HCT116 (cell line): ENCODE measurements at regions of chr16 and their contacts with region 1.

Region 1: DNA sequence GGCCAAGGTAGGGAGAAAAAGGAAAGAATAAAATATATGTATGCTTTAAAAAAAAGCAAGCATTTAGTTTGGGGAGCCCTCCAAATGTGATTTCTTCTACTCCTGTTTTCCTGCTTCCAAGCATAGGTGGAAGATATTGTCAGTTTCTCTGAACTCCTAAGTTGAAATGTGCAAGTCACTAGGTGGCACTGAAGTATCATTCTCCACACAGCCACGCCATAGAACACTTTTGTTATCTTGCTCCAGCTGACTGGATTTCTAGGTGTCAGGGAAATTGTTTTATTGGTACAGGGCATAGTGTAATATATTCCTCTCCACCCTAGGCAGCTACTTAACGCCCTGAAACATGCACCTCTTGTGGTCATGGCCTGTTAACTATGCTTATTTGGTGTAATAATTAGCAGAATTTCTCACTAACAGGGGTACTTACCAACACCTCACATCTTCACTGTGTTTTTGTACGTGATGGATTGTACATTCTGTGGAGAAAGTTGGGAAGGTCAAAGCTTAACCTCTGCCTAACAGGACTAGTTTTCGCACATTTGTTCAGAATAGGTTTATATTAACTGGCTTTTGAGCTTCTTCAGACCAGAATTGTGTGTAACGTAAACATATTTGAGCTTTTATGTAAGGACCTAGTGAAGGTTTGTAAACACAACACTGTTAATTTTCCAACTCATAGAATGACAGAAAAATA is 69.3 kb downstream of the FTO start:
- DNase-seq: no peak
- ATAC-seq: peak; percentile 51
- H3K4me3 ChIP-seq: no peak overlapping the region
- H3K27ac ChIP-seq: no peak overlapping the region
- H3K4me1 ChIP-seq: peaks cover 32 to 40% of the 10 kb centered on the region in 2 experiments
- H3K27me3 ChIP-seq: no peaks in the 10 kb centered on the region
- CTCF ChIP-seq: peak; percentile 46 to 68 (median 56); a peak in 4 of 6 replicates
- POLR2A ChIP-seq: no peak
- RAD21 ChIP-seq: peak; percentile 91

Region 2: GRCh38 chr16:53549970-53550690 is 223.2 kb before region 1 on chr16:
- CTCF ChIA-PET with region 1: interaction called, 5 read pairs
- POLR2A ChIA-PET with region 1: no interaction called
- RAD21 ChIA-PET with region 1: no interaction called
- intact Hi-C with region 1: loop called (anchors 5 kb)
- DNase-seq: peak; percentile 46
- ATAC-seq: peak; percentile 86
- H3K4me3 ChIP-seq: no peak overlapping the region
- H3K27ac ChIP-seq: no peak overlapping the region
- H3K4me1 ChIP-seq: peaks cover 0 to 9% of the 10 kb centered on the region in 2 experiments; a peak in 2 of 4 replicates
- H3K27me3 ChIP-seq: no peaks in the 10 kb centered on the region
- CTCF ChIP-seq: peak; percentile 59 to 82 (median 61); a peak in 5 of 6 replicates
- POLR2A ChIP-seq: no peak
- RAD21 ChIP-seq: peak; percentile 89

Region 3: DNA sequence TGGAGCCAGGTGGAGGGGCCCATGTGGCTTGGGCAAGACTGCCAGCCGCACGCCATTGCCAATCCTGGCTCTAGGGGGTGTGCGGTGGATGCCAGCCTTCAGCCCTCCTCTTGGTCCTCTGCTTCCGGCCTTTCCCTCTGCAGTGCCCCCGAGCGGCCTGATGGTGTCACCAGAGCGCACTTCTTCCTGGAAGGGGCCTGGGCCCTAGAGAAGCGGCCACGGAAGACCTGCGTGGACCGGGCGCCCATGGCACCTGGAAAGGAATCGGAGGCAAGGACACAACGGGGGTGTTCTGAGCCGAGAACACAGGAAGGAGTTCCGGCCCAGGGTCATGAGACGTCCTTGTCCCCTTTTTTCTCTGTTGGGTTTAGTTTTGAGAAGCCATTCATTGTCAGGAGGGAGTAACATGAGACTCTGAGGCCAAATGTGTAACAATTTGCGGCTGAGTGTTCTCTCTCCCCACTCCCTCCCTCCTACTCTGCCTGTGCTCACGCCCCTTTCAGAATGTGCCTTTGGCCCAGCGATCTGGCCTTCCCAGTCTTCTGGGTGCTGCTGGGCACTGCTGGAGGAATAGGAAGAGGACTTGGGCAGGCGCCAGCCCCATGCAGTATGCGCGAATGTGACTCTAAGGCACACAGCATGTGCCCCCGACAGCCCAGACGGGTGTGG is 420.5 kb after region 1 on chr16:
- CTCF ChIA-PET with region 1: interaction called, 3 read pairs
- POLR2A ChIA-PET with region 1: no interaction called
- RAD21 ChIA-PET with region 1: no interaction called
- intact Hi-C with region 1: loop called (anchors 5 kb)
- DNase-seq: peak; percentile 59
- ATAC-seq: peak; percentile 99
- H3K4me3 ChIP-seq: peak overlapping the region; percentile 21 to 28; a peak in 3 of 4 replicates
- H3K27ac ChIP-seq: peak overlapping the region; percentile 13; the same call in 1 of the 2 replicates
- H3K4me1 ChIP-seq: peaks cover 0 to 9% of the 10 kb centered on the region in 2 experiments; a peak in 3 of 4 replicates
- H3K27me3 ChIP-seq: no peaks in the 10 kb centered on the region; the same call in 1 of the 2 replicates
- CTCF ChIP-seq: peak; percentile 77 to 94 (median 90)
- POLR2A ChIP-seq: no peak
- RAD21 ChIP-seq: peak; percentile 72

Region 4: DNA sequence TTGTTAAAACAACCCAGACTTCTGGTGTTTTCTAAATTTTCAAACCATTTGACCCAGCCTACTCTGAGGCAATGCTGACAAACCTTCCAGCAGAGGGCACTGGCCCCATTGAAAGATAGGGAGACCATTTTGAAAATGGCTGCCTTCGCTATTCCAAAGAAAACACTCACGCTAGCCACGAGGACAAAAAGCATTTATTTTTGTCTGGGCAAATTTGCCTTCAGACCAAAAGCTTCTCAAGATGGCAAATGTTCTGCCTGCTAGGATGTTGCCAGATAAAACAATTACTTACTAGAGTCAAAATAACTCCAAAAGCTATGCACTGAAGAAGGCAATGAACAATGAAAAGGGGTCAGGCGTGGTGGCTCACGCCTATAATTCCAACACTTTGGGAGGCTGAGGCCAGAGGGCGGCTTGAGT is 860.7 kb after region 1 on chr16:
- CTCF ChIA-PET with region 1: no interaction called
- POLR2A ChIA-PET with region 1: no interaction called
- RAD21 ChIA-PET with region 1: no interaction called
- intact Hi-C with region 1: loop called (anchors 10 kb)
- DNase-seq: peak; percentile 39
- ATAC-seq: peak; percentile 88
- H3K4me3 ChIP-seq: peak overlapping the region; percentile 11 to 24; a peak in 1 of 4 replicates
- H3K27ac ChIP-seq: no peak overlapping the region
- H3K4me1 ChIP-seq: peaks cover 0 to 4% of the 10 kb centered on the region in 2 experiments; a peak in 1 of 4 replicates
- H3K27me3 ChIP-seq: 0 out of 2 replicates have a peak, but pooled peaks cover 4% of the 10 kb centered on the region
- CTCF ChIP-seq: peak; percentile 54 to 83 (median 81); a peak in 5 of 6 replicates
- POLR2A ChIP-seq: no peak
- RAD21 ChIP-seq: peak; percentile 70

Region 5: DNA sequence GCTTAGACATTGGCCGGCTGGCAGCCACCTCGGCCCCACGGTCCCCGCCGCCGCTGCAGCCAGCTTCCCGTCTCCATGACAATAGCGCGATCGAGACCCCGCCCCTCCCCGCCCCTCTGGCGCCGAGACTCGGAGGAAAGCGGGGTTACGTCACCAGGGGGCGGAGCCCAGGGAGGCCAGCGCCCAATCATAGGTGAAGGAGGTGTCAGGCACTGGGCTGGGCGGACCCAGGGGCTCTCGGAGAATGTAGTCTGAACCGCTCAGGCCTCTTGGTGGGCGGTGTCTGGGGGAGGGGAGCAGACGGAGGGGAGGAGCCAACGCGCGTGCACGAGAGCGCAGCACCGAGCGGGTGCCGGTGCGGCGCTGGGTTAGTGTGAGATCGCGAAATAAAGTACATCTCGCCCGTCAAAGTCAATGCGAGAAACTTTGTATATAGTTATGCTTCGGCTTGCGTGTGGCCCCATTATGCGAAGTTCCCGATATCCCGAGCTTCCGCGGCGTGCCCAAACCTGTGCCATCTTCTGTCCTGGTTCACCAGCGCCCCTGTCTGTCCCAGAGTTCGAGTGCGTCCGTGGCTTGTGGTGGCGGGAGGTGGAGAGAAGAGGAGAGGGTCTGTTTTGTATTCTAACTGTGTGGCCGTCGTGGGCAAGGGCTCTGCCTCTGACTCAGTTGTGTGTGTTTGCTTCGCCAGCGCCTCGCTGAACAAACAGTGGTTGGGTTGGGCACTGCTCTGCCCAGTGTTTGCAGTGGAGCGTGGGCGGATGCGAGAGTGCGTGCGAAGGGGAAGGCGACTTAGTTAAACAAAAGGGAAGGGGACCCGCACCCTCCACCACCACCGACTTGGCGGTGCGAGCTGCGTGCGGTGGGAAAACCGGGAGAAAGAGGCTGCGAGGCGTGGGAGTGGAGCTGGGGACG is 1156.0 kb after region 1 on chr16:
- CTCF ChIA-PET with region 1: no interaction called
- POLR2A ChIA-PET with region 1: no interaction called
- RAD21 ChIA-PET with region 1: no interaction called
- intact Hi-C with region 1: loop called (anchors 10 kb)
- DNase-seq: peak; percentile 87
- ATAC-seq: peak; percentile 88
- H3K4me3 ChIP-seq: peak overlapping the region; percentile 47 to 60
- H3K27ac ChIP-seq: peak overlapping the region; percentile 76; the same call in 1 of the 2 replicates
- H3K4me1 ChIP-seq: peaks cover 0 to 7% of the 10 kb centered on the region in 2 experiments; a peak in 1 of 4 replicates
- H3K27me3 ChIP-seq: peaks cover 20% of the 10 kb centered on the region
- CTCF ChIP-seq: 0 out of 6 replicates have a peak, but pooled peaks of 1 of the 3 experiments have one; percentile 19
- POLR2A ChIP-seq: no peak
- RAD21 ChIP-seq: no peak; the same call in 1 of the 2 replicates